ENCODE measurements at regions of chr15 and their contacts with region 1.

Region 1: DNA sequence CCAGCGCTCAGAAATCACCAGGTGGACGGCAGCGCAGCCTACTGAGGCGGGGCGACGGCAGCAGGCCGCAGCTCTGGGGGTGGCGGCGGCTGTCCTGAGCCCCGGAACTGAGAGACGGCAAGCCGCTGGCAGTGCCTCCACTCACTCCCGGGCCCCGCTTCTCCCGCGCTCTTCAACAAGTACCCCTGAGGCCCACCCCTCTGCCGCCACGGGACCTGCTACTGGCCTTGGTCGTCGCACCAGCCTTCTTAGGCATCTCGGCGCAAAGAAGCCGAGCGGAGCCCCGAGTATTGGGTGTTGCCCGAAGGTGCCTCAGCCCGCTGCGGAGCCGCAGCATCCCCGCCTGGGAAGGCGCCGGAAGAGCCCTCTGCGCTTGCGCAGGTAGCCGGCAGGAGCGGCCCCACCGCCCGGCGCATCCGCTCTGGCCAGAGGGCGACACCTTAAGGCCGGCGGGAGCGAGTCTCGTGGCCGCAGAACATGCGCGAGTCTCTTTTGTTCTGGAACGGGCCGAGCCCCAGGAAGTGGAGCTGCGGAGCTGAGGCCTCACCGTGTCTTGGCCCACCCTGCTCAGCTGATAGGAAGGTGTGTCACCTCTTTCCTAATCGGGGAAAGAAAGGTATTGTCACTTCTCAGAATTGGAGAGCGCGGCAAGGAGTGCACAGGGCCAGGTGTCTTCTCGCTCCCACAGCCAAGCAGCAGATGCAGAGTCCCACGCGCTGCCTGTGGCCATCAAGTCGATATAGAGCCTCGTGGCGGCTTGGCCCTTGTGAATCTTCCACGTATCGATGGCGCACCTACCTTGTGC is at the start of gene C15orf40:
- DNase-seq: peak; percentile 94 to 95
- ATAC-seq: peak; percentile 93 to 96
- H3K4me3 ChIP-seq: peak within 1 kb of the TSS; percentile 72
- H3K27ac ChIP-seq: peak within 1 kb of the TSS; percentile 78 to 92
- H3K4me1 ChIP-seq: peaks cover 26% of the 10 kb centered on the region
- CTCF ChIP-seq: peak; percentile 71
- EP300 ChIP-seq: no peak
- POLR2A ChIP-seq: peak; percentile 72
- RAD21 ChIP-seq: peak in 1 of 2 experiments; percentile 33; a peak in 1 of 5 replicates
- polyA plus RNA-seq, gene C15orf40: 48.0 and 54.1 TPM in 2 replicates

Region 2: DNA sequence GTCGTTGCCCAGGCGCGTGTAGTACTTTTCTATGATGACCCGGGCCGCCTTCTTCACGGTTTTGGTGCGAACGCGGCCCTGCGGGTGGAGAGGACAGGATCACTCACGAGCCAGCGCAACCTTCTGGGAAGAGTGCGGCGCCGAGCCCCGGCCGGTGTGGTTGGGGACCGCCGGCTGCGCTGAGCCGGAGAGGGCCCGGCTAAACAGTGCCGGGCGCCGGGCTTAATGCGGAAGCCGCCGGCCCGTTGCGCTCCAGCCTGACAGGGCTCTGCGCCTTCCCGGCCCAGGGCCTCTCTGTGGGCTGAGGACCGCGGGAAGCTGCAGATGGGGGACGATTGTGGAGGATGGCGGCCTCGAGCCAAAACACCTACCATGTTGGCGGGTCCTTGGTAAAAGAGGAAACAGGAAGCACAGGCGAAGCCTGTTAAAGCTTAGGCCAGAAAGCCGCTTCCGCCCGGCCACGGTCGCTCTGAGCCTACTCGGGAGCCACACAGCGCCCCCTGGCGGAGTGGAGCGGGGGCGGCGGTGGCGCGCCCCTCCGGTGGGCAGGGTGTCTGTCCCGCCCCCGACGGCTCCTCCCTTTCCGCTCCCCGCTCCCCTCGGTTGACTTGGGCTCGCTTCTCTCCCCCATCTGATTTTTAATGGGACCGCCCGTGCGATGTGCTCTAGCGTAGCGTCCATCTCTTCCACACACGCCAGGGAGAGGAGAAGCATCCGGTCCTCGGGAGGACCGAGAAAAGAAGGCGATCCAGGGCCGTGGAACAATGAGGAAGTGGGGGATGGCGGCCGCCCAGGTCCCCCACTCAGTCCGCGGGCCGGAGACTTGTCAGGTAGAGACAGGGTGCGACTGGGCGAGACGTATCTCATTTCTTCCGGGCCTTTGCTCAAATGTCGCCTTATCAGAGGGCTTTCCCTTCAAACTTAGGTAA is 471.2 kb before region 1 on chr15 and contains the start of gene RPS17:
- CTCF ChIA-PET with region 1: interaction called, 17 read pairs
- POLR2A ChIA-PET with region 1: interaction called, 9 read pairs
- DNase-seq: peak; percentile 97 to 98
- ATAC-seq: peak; percentile 80 to 96
- H3K4me3 ChIP-seq: peak within 1 kb of the TSS; percentile 79
- H3K27ac ChIP-seq: peak within 1 kb of the TSS; percentile 89 to 94
- H3K4me1 ChIP-seq: peaks cover 28% of the 10 kb centered on the region
- CTCF ChIP-seq: peak; percentile 99
- EP300 ChIP-seq: peak in 1 of 2 experiments; percentile 48; a peak in 1 of 5 replicates
- POLR2A ChIP-seq: peak; percentile 90
- RAD21 ChIP-seq: peak in 1 of 2 experiments; percentile 64; a peak in 4 of 5 replicates
- polyA plus RNA-seq, gene RPS17: 5,298 and 6,127 TPM in 2 replicates

Region 3: DNA sequence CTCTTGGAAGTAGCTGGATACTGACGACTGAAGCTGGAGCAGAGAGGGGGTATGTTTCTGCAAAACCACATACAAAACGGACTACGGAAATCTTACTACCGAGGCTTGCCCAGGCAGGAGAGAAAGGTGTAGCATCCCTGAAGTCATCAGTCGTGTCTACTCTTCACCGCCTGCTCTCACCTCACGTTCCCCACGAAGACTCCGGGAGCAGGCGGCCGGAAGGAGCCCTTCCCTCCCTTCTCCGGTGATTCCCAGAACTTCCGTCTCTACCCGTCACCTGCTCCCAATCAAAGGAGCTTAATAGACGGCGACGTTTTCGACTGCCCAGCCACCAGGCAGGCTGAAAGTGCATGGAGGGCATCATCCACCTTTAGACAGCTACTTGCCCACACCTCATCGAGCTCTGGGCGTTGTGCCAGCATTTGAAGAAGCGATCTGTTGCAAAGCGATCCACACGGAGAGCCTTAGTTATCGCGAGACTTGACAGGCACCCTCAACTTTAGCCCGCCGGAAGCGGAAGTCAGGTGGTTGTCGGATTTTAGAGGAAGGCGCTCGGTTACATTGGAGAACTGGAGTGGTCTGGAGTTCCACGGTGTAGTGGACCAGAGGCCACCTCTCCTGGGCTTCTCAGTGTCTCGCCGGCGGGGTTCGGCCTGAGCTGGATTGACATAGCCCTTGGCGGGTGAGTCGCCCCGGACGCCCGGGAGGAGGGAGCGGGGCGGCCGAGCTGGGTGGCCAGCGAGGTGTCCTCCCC is 25.6 kb before region 1 on chr15 and contains the start of gene RAMAC:
- CTCF ChIA-PET with region 1: interaction called, 10 read pairs
- POLR2A ChIA-PET with region 1: interaction called, 16 read pairs
- DNase-seq: peak; percentile 93 to 98
- ATAC-seq: peak; percentile 99
- H3K4me3 ChIP-seq: peak within 1 kb of the TSS; percentile 59
- H3K27ac ChIP-seq: peak within 1 kb of the TSS; percentile 95 to 96
- H3K4me1 ChIP-seq: peaks cover 13% of the 10 kb centered on the region
- CTCF ChIP-seq: no peak
- EP300 ChIP-seq: no peak
- POLR2A ChIP-seq: peak; percentile 45; the same call in 1 of the 2 replicates
- RAD21 ChIP-seq: no peak
- polyA plus RNA-seq, gene RAMAC: 50.3 and 68.1 TPM in 2 replicates

Region 4: DNA sequence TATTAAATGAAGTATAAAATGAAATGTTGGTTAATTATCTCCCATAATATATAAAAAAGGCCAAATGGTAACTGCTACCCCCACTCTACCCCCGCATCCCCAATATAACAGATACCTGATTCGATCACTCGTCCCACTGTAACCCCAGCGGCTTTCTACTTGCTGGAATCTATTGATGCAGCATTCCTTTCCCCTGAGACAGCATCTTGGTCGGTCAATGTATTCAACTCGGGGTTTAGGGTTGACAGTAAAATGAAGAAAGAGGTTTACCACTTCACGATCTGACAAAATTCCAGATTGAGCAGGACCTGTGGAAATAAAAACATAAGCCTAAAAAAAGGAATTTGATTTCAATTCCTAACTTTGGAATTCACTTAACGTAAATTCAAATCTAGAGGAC is 18.5 kb after region 1 on chr15:
- CTCF ChIA-PET with region 1: interaction called, 60 read pairs
- POLR2A ChIA-PET with region 1: interaction called, 3 read pairs
- DNase-seq: no peak
- ATAC-seq: no peak
- H3K4me3 ChIP-seq: no peak overlapping the region
- H3K27ac ChIP-seq: no peak overlapping the region
- H3K4me1 ChIP-seq: no peaks in the 10 kb centered on the region
- CTCF ChIP-seq: no peak
- EP300 ChIP-seq: no peak
- POLR2A ChIP-seq: no peak
- RAD21 ChIP-seq: no peak

Region 5: DNA sequence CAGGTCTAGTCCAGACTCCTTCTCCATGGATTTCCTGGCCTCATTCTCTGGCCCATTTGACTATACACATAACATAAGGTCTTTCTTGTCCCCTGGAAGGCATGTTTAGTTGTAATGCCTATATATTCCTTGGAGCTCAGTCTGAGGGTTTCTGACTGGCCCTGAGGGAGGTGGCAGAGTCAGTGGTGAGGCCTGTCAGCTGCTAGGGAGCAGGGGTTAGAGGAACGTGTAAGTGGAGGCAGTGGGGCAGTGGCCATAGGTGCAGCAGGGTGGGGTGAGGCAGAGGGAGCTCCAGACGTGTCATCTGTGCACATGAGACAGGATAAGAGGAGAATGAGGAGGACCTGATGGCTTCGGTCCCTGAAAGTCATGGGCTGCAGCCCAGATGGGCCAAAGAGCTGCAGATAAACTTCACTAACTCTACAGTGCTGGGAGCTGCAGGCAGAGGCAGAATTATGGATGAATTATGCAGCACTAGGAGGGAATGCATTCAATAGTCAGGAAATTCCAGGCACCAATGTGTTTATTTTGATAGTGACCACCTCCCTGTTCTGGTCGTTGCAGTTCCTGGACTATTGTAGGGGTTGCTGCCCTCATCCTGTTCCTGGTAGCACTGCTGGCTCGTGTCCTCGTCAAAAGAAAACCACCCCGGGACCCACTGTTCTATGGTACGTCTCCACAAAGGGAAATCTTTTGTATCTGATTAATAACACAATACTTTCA is 100.9 kb after region 1 on chr15:
- CTCF ChIA-PET with region 1: no interaction called
- POLR2A ChIA-PET with region 1: no interaction called
- DNase-seq: no peak
- ATAC-seq: no peak
- H3K4me3 ChIP-seq: no peak overlapping the region
- H3K27ac ChIP-seq: no peak overlapping the region
- H3K4me1 ChIP-seq: peaks cover 9% of the 10 kb centered on the region; the same call in 1 of the 3 replicates
- CTCF ChIP-seq: no peak
- EP300 ChIP-seq: no peak
- POLR2A ChIP-seq: no peak
- RAD21 ChIP-seq: no peak

Region 6: DNA sequence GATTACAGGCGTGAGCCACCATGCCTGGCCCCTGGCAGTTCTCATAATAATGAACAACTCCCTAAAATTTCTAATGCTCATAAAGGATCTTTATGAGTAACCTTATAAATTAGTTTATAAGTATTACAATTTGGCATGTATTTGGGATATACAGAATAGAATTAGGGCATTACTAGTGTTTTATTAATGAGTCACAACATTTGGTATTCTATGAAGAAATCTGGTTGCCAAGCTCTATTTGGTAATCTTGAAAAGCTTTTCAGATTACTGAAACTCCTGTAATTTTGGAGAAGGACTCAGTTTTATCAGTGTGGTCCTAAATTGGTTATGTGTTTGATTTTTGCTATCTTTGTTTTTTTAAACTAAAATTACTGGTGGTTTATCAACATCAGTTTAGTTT is 141.8 kb after region 1 on chr15:
- CTCF ChIA-PET with region 1: no interaction called
- POLR2A ChIA-PET with region 1: no interaction called
- DNase-seq: no peak
- ATAC-seq: no peak
- H3K4me3 ChIP-seq: no peak overlapping the region
- H3K27ac ChIP-seq: no peak overlapping the region
- H3K4me1 ChIP-seq: no peaks in the 10 kb centered on the region; the same call in 2 of the 3 replicates
- CTCF ChIP-seq: no peak
- EP300 ChIP-seq: no peak
- POLR2A ChIP-seq: no peak
- RAD21 ChIP-seq: no peak

Region 7: GRCh38 chr15:83207622-83208411 is 196.3 kb after region 1 on chr15 and contains the start of gene HDGFL3:
- CTCF ChIA-PET with region 1: interaction called, 5 read pairs
- POLR2A ChIA-PET with region 1: interaction called, 11 read pairs
- DNase-seq: peak; percentile 67 to 74
- ATAC-seq: peak; percentile 68 to 80
- H3K4me3 ChIP-seq: peak within 1 kb of the TSS; percentile 82
- H3K27ac ChIP-seq: peak within 1 kb of the TSS; percentile 96
- H3K4me1 ChIP-seq: peaks cover 19% of the 10 kb centered on the region
- CTCF ChIP-seq: peak; percentile 29; the same call in 2 of the 3 replicates
- EP300 ChIP-seq: no peak
- POLR2A ChIP-seq: peak; percentile 76
- RAD21 ChIP-seq: peak; percentile 30 to 41; a peak in 1 of 5 replicates
- polyA plus RNA-seq, gene HDGFL3: 49.3 and 91.2 TPM in 2 replicates

Measured in A549 (cell line).